PC-3 (cell line): ENCODE measurements at regions of chr2 and their contacts with region 1.

Region 1: GRCh38 chr2:32946314-32947075 is at the start of gene LTBP1:
- DNase-seq: peak; percentile 80
- ATAC-seq: peak; percentile 75
- H3K4me3 ChIP-seq: peak within 1 kb of the TSS; percentile 72
- H3K27ac ChIP-seq: 0 out of 2 replicates have a peak within 1 kb of the TSS, but pooled peaks have one; percentile 21
- H3K4me1 ChIP-seq: peaks cover 7% of the 10 kb centered on the region
- H3K27me3 ChIP-seq: no peaks in the 10 kb centered on the region
- CTCF ChIP-seq: peak; percentile 95
- total RNA-seq, gene LTBP1: 34.0 and 45.9 TPM in 2 replicates

Region 2: DNA sequence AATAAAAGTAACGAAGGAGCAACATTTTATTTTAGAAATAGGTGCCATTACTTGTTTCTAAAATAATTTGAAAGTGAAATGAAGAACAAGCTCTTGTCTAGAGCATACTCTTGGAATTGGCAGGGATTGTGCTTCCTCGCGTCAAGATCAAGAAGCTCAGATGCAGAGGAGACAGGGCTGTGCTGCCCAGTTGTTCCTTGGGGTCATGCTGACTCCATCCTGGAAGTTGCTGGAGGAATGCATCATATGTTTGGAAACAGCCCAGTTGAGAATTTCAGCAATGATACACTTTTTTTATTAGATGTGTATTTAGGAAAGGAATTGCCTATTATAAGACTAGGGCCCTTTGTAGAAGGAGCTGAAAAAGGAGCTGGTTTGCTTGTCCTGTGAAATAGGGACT is 17.4 kb after region 1 on chr2:
- CTCF ChIA-PET with region 1: no interaction called
- POLR2A ChIA-PET with region 1: no interaction called
- intact Hi-C with region 1: no loop called
- DNase-seq: peak; percentile 49
- ATAC-seq: peak; percentile 94
- H3K4me3 ChIP-seq: no peak overlapping the region
- H3K27ac ChIP-seq: no peak overlapping the region
- H3K4me1 ChIP-seq: no peaks in the 10 kb centered on the region
- H3K27me3 ChIP-seq: no peaks in the 10 kb centered on the region
- CTCF ChIP-seq: no peak

Region 3: DNA sequence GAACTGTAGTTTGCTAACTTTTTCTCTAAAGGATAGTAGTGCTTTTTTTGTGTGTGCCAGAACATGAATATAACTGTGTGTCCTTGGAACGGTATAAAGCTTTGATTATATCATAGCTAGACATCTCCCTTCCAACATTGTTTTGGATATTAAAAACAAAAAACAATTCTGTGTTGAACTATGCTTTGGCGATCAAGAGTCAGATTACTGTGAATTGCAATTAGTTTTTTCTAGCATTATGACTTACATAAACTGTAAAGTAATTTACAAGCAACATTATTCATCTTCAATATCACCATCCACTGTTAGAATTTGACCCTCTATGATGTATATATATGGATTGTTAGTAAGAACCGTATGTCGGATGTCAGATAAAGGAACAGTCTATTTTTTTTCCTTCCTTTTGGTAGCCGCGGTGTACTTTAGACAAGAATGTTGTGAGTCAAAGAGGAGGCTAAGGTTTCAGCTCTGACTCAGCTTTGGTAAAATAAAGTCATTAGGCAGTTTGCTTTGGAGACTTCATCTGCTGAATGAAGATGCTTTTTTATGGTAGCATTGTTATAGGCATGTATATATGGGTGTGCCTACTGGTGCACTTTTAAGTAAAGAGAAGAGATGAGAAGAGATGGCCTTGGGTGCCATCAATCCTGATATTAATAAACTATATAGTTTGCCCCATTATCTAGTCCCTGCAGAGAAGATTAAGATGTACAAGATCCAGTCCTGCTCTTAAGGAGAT is 76.7 kb after region 1 on chr2:
- CTCF ChIA-PET with region 1: interaction called, 5 read pairs
- POLR2A ChIA-PET with region 1: interaction called, 7 read pairs
- intact Hi-C with region 1: loop called (anchors 2 kb)
- DNase-seq: peak; percentile 96
- ATAC-seq: peak; percentile 96
- H3K4me3 ChIP-seq: 0 out of 2 replicates have a peak overlapping the region, but pooled peaks have one; percentile 13
- H3K27ac ChIP-seq: peak overlapping the region; percentile 62
- H3K4me1 ChIP-seq: peaks cover 35% of the 10 kb centered on the region
- H3K27me3 ChIP-seq: no peaks in the 10 kb centered on the region
- CTCF ChIP-seq: no peak